ENCODE measurements at regions of chr12 and their contacts with region 1.

Region 1: GRCh38 chr12:104286538-104287482 is 16.7 kb upstream of the EID3 start:
- DNase-seq: peak; percentile 95
- ATAC-seq: peak; percentile 91
- H3K4me3 Mint-ChIP-seq: peak overlapping the region; percentile 90
- H3K27ac Mint-ChIP-seq: peak overlapping the region; percentile 96
- H3K4me1 Mint-ChIP-seq: peaks cover 15% of the 10 kb centered on the region
- H3K27me3 Mint-ChIP-seq: no peaks in the 10 kb centered on the region

Region 2: DNA sequence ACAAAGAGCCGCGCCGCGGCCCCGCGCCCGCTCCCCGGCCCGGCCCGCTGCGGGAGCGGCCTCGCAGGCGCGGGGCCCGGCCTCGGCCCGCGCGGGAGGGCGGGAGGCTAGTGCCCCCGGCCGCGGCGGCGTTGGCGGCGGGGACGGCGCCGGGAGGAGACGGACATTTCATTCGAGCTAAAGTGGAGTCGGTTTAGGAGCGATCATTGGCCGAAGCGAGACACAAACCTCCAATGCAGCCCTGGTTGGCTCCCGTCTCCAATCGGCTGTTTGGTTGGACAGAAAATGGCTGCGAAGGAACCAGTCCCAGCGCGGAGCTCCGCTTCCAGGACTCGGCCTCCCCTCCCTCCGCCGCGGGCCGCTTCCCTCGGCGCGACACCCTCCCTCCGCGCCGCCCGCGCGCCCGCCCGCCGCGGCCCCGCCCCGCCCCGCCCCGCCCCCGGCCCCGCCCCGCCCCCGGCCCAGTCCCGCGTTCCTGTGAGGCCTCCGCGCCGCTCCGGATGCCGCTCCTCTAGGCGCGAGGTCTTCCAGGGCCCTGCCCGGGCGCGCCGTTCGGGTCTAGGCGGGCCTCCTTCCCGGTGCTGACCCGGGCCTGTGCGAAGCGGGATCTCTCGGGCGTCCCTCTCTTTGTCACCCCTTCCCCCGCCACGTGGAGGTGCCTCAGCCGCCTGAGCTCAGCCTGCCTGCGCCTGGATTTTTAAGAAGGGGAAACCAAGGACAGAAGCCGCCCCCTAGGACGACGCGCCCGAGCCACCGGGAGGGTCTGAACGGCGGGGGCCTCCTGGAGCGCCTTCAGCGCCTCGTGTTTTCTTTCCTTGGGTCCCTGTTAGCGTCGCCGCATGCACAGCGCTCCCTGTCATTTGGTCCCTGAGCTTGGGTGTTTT is 148.7 kb before region 1 on chr12 and contains the start of gene NFYB:
- CTCF ChIA-PET with region 1: interaction called, 3 read pairs
- POLR2A ChIA-PET with region 1: interaction called, 34 read pairs
- DNase-seq: peak; percentile 95
- ATAC-seq: peak; percentile 98
- H3K4me3 Mint-ChIP-seq: peak within 1 kb of the TSS; percentile 85
- H3K27ac Mint-ChIP-seq: peak within 1 kb of the TSS; percentile 92
- H3K4me1 Mint-ChIP-seq: peaks cover 20% of the 10 kb centered on the region
- H3K27me3 Mint-ChIP-seq: peaks cover 18% of the 10 kb centered on the region
- total RNA-seq, gene NFYB: 25.4 to 29.8 TPM

Region 3: DNA sequence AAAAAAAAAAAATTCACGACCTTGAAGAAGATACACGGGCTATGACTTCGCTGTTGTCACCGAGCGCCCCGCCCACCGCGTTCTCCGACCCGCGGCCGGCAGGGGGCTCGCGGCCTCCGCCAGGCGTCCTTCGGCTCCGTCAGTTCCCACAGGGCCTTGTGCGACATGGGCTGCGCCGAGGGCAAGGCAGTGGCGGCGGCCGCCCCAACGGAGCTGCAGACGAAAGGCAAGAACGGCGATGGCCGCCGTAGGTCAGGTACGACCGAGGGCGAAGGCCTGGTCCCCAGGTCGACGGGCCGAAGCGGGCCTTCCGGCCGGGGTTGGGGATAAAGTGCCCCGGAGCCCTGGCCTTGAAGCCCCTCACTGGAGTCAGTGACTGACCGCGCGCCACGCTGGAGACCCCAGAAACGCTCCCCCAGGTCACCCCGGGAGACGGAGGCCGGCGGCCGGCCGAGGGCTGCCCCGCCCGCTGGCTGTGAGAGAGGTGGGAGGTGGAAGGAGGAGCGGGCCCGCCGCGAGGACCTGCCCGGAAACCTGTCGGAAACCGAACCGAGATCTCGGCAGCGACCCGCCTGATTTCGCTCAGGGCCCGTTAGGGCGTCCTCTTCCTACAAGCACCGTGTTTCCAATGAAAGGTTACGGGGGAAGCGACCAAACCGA is 71.0 kb before region 1 on chr12 and contains the start of gene TXNRD1:
- CTCF ChIA-PET with region 1: interaction called, 42 read pairs
- POLR2A ChIA-PET with region 1: interaction called, 5 read pairs
- DNase-seq: peak; percentile 87
- ATAC-seq: peak; percentile 95
- H3K4me3 Mint-ChIP-seq: peak within 1 kb of the TSS; percentile 75
- H3K27ac Mint-ChIP-seq: peak within 1 kb of the TSS; percentile 67
- H3K4me1 Mint-ChIP-seq: peaks cover 35% of the 10 kb centered on the region
- H3K27me3 Mint-ChIP-seq: peaks cover 11% of the 10 kb centered on the region
- total RNA-seq, gene TXNRD1: 88.7 to 98.5 TPM

Region 4: DNA sequence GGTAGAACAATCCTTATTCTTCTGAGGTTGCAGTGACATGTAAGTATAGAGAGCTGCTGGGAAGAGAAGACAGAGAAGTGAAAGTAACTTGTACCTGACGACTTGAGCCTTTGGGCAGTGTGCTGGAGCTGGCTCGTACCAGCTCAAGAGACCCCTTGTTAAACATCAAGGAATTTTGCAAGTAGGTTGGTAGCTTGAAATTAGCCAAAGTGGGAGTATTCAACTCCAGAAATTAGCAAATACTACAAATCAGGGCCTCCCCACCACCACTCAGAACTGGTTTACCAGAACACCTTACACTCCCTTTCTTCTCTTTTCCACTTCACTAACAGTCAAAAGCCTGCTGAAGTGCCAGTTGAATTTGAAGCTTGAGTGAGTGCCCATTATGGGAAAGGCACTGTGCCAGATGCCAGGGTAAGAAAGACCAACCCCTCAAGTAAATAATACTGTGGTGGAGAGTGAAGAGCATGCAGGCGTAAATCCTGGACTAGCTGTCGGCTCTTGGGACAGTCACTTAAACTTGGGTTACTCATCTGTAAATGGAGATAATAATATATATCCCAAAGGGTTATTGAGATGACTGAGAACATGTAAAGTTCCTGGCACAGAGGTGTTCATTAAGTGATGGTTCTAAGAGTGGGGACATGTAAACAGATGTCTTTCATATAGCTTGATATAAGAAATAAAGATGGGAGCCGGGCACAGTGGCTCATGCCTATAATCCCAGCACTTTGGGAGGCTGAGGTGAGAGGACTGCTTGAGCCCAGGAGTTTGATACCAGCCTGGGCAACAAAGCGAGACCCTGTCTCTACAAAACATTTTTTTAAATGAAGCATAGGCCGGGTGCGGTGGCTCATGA is 10.3 kb before region 1 on chr12:
- CTCF ChIA-PET with region 1: interaction called, 4 read pairs
- POLR2A ChIA-PET with region 1: interaction called, 15 read pairs
- DNase-seq: no peak
- ATAC-seq: peak; percentile 71
- H3K4me3 Mint-ChIP-seq: peak overlapping the region; percentile 57
- H3K27ac Mint-ChIP-seq: peak overlapping the region; percentile 71
- H3K4me1 Mint-ChIP-seq: peaks cover 12% of the 10 kb centered on the region
- H3K27me3 Mint-ChIP-seq: peaks cover 13% of the 10 kb centered on the region

Region 5: GRCh38 chr12:104303538-104304151 is 16.8 kb after region 1 on chr12 and contains the start of gene EID3:
- CTCF ChIA-PET with region 1: interaction called, 37 read pairs
- POLR2A ChIA-PET with region 1: interaction called, 50 read pairs
- DNase-seq: peak; percentile 93
- ATAC-seq: peak; percentile 98
- H3K4me3 Mint-ChIP-seq: peak within 1 kb of the TSS; percentile 90
- H3K27ac Mint-ChIP-seq: peak within 1 kb of the TSS; percentile 99
- H3K4me1 Mint-ChIP-seq: peaks cover 54% of the 10 kb centered on the region
- H3K27me3 Mint-ChIP-seq: no peaks in the 10 kb centered on the region
- total RNA-seq, gene EID3: 7.2 to 7.8 TPM

Measured in activated CD8-positive, alpha-beta T cell treated with anti-CD3 and anti-CD28 coated beads, Interleukin-2, amount 10 ng/mL, durations not matched to agents 7 days and 5 days (primary cell).